Aorta (tissue), 5 donors: ENCODE measurements at regions of chr4 and their contacts with region 1.

Region 1: DNA sequence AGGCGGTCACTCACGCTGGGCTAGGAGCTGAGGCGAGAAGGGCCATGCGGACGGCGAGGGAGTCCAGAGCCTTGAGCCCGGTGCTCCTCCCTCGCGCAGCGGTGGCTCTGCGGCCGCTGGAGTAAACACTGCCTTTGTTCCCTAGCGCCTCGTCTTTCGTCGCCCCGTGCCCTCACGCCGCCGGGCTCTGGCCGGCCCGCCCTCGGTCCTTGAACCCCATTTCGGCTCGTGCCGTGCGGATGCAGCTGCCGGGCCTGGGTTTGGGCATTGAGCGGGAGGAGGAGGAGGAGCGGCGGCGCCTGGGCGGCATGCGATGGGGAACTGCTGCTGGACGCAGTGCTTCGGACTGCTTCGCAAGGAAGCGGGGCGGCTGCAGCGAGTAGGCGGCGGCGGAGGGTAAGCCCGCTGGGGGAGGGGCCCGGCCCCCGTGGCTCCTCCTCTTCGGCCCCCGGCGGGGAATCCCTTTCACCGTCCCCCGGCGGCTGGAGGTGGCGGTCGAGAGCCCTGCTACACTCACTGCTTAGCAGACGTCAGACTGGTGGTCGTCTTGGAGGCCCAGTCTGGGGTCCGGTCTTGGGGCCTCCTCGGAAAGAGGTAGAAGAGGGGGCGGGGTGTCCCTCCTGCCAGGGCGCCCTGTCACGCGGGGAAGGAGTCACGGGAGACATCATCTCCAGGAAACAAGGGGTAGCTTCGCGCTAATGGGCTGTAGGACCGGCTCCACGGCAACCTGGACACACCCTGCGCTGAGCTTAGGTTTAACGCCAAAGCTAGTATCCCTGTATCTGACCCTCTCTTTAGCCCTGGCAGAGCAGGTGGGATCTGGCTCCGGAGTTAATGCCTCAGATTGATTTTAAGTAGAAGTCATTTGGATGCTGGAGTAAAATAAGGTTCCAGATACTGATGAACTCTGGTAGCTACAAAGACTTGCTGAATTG is at the start of gene AP1AR:
- DNase-seq: peak; percentile 89 to 94
- ATAC-seq: peak; percentile 91
- H3K4me3 ChIP-seq: peak within 1 kb of the TSS; percentile 89 to 95
- H3K27ac ChIP-seq: peak within 1 kb of the TSS; percentile 0 to 96
- H3K4me1 ChIP-seq: no peaks in the 10 kb centered on the region
- H3K27me3 ChIP-seq: no peaks in the 10 kb centered on the region
- total RNA-seq, gene AP1AR: 12.9 to 17.9 TPM

Region 2: GRCh38 chr4:112099701-112100297 is 132.2 kb before region 1 on chr4:
- intact Hi-C with region 1: loop called (anchors 2 kb)
- DNase-seq: no peak
- ATAC-seq: peak; percentile 79
- H3K4me3 ChIP-seq: no peak overlapping the region
- H3K27ac ChIP-seq: no peak overlapping the region
- H3K4me1 ChIP-seq: no peaks in the 10 kb centered on the region
- H3K27me3 ChIP-seq: no peaks in the 10 kb centered on the region

Region 3: GRCh38 chr4:112145326-112145819 is 86.7 kb before region 1 on chr4 and contains the start of gene FAM241A:
- intact Hi-C with region 1: loop called (anchors 1 to 2 kb)
- DNase-seq: peak; percentile 89 to 96
- ATAC-seq: peak; percentile 99
- H3K4me3 ChIP-seq: peak within 1 kb of the TSS; percentile 75 to 97
- H3K27ac ChIP-seq: peak within 1 kb of the TSS in 1 of 2 donors; percentile 86
- H3K4me1 ChIP-seq: peaks cover 0 to 4% of the 10 kb centered on the region in 2 donors
- H3K27me3 ChIP-seq: no peaks in the 10 kb centered on the region
- total RNA-seq, gene FAM241A: 7.1 to 8.9 TPM

Region 4: DNA sequence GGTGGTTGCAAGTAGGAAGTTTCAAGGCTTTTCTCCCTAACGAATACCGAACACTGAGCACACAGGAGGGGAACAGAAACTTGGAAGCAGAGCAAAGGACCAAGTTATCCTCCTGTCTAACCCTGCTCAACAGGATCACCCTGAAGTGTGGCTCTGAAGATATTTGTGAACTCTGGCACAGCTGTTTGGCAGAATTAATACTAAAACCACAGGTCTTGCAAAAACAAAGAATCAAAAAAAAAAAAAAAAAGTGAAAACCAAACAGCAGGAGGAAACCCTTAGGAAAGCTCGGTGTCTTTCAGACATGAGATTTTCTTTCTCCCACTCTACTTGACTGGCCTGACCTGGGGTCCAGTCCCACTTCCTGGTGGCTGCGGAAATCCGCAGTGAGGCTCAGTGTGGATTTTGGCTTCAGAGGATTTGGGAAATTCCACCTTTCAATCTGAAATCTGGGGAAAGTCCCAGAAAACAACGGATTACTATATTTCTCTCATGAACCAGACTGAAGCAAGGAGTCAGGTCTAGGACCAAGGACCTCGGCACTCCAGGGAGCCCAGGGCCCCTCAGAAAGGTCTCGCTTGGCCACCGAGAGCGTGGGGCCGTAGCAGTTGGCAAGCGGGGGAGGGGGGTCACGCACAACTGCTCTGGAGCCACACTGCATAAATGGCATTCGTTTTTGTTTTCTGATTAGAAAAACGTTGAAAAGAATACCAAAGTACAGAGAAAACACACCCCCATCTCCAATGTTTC is 52.8 kb after region 1 on chr4:
- intact Hi-C with region 1: loop called in 1 of 2 experiments (anchors 5 kb)
- DNase-seq: peak in 1 of 2 donors; percentile 45
- ATAC-seq: peak; percentile 55
- H3K4me3 ChIP-seq: peak overlapping the region; percentile 51 to 84
- H3K27ac ChIP-seq: peak overlapping the region in 1 of 2 donors; percentile 48
- H3K4me1 ChIP-seq: peaks cover 0 to 2% of the 10 kb centered on the region in 2 donors
- H3K27me3 ChIP-seq: no peaks in the 10 kb centered on the region